ENCODE measurements at regions of chr10 and their contacts with region 1.

Region 1: DNA sequence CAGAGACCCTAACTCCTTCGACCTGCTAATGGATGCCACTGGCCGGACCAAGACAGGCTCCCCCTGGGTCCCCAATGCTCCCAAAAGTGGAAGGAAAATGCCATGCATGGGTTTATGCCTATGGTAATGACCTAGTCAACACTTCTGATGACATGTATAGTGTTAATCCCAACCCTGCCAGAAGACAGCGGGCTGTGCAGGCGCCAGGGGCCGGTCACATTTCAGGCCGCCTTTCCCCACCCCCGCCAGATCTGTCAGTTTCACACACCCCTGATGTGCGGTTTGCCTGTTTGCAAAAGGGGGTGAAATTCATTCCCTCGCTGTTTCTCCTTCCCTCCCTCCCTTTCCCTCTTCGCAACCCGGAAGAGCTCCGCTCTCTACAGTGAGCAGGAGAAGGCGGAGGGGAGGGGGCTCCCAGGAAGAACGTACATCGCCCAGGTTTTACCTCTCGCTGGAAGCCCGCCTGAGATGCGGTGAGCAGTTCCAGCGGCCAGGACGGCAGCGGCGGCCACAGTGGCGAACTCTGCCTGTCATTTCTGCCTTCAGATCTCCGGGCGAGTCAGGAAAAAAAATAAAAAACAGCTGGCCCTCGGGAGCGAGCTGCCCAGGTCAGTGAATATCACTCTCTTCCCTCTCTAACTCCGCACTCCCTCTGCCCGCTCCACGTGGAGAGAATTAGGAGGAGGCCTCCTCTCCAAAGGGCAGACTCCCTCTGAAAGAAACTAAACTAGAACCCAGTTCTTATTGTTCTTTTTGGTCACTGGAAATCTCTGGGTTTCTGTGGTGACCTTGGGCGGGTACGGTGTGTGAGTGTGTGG is 9.4 kb upstream of the GATA3 start:
- DNase-seq: peak; percentile 68
- H3K4me3 Mint-ChIP-seq: peak overlapping the region; percentile 57
- H3K27ac Mint-ChIP-seq: peak overlapping the region; percentile 6
- H3K4me1 Mint-ChIP-seq: peaks cover 37% of the 10 kb centered on the region
- H3K27me3 Mint-ChIP-seq: peaks cover 83% of the 10 kb centered on the region

Region 2: DNA sequence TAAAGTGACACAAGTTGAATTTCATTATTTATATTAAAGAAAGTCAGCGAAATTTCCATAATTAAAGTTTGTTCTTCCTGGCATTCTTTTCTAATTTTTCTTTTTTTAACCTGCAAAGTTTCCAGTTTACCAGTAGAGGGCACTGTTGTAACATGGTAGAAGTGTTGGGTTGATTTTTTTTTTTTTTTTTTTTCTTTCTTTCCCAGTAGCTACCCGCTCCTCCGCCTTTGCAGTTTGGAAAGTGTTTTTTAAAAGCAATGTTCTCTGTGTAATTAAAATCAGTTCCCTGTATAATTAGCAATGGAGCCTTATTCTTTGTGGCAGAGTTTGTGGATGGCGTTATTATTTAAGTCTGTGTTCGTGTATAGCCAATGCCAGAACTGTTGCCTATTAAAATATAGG is 173.1 kb before region 1 on chr10:
- intact Hi-C with region 1: loop called (anchors 5 kb)
- DNase-seq: no peak
- H3K4me3 Mint-ChIP-seq: peak overlapping the region; percentile 63
- H3K27ac Mint-ChIP-seq: no peak overlapping the region
- H3K4me1 Mint-ChIP-seq: peaks cover 7% of the 10 kb centered on the region
- H3K27me3 Mint-ChIP-seq: no peaks in the 10 kb centered on the region

Measured in activated CD4-positive, alpha-beta T cell treated with anti-CD3 and anti-CD28 coated beads, Interleukin-2, amount 10 ng/mL, durations not matched to agents 24 days and 14 days (primary cell).